ENCODE measurements at regions of chr6 and their contacts with region 1.

Region 1: GRCh38 chr6:116371120-116371917 is 572 bp downstream of the DSE start:
- DNase-seq: peak; percentile 74
- CTCF ChIP-seq: no peak

Region 2: DNA sequence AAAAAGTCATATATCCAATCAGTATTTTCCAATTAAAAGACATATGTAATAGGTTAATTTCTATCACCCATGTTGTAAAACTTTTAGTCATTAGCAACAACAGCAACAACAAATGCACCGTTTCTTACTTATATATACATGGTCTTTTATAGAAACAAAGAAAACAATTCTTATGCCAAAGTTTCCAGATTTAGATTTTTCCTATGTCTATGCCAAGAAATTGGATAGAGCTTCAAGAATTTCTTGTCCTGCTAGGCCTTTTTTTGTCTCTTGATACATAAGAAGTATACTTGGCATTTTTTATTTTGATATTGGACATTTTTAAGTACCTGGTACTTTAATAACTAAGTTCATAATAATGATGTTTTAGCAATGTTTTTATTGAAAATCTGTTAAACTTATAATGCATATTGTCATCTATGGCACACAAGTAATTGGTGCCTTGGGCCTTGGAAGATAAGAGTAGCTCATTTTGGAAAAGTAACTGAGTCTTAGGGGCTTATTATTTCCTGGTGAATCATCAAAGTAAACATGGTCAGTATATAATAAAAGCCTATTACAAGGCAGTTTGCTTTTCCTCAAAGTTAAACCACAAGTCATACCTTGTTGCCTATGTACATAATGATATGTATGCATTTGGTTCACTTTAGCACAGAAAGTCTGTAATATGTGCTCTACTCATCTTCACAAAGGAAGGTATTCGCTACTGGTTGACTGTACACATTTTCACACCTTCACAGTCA is 300.5 kb before region 1 on chr6:
- CTCF ChIA-PET with region 1: no interaction called
- POLR2A ChIA-PET with region 1: no interaction called
- DNase-seq: no peak
- CTCF ChIP-seq: no peak

Region 3: DNA sequence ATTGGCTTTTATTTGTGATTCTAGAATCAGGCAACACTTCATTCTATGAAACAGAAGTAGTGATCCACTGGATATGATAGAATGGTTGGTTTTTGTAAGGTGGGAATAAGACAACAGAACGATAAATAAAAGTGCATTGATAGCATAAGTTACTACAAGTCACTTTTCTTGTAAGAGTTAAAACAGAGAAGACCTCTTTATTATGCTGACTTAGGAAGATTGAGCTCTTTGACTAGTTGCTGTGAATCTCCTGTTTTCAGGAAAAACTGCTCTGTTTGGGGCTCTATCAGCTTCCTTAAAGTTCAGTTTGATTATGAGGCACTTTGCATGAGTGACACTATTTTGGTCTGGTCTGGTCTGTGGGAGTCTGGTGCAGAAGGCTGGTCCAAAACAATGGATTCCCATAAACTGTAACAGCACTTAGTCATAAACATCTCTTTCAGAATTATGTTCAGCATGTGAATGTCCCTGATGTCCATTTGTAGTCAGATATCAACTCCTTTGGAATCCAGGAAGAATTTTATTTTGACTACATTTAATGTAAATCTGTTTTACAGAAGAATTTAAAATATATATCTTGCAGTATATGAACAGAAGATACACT is 35.6 kb before region 1 on chr6:
- CTCF ChIA-PET with region 1: no interaction called
- POLR2A ChIA-PET with region 1: no interaction called
- DNase-seq: no peak
- CTCF ChIP-seq: no peak

Region 4: DNA sequence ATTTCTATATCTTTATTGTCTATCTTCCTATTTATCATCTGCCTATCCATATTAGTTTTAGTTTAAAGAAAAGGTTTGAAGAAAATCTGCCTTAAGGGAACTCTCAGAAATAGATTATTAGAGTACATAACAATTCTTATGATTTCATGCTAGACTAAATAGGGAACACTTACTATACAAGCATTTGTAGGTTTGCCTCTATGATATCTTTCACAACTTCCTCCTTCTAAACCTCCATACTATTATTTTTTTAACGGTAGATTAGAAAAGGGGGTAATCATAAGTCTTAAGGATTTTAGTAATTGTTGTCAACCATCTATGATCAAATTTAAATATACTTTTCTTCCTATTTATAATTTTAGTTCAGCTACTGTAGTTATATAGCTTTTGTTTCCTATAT is 12.2 kb before region 1 on chr6:
- CTCF ChIA-PET with region 1: interaction called, 11 read pairs
- POLR2A ChIA-PET with region 1: no interaction called
- DNase-seq: no peak
- CTCF ChIP-seq: no peak

Region 5: DNA sequence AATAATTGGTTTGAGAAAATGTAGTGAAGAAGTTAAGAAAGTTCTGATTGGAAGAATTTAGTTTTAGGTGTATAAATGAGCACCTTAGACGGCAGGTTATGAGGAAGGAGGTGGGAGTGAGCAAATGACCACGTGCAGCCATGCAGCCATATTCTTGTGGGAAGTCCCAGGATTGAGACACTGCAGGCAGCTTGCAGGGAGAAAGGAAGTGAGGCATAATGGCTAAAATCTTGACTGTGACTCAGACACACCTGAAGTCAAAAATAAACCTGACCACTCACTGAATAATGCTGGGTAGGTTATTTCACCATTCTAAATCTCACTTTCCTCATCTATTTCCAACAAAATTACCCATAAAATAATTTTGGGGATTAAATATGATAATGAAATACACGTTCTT is 16.1 kb after region 1 on chr6:
- CTCF ChIA-PET with region 1: interaction called, 11 read pairs
- POLR2A ChIA-PET with region 1: no interaction called
- DNase-seq: peak; percentile 25
- CTCF ChIP-seq: no peak

Region 6: GRCh38 chr6:116542426-116542825 is 171.1 kb after region 1 on chr6:
- CTCF ChIA-PET with region 1: no interaction called
- POLR2A ChIA-PET with region 1: no interaction called
- DNase-seq: no peak
- CTCF ChIP-seq: no peak

Measured in GM10248 (cell line).